PC-9 (cell line): ENCODE measurements at regions of chr16 and their contacts with region 1.

Region 1: DNA sequence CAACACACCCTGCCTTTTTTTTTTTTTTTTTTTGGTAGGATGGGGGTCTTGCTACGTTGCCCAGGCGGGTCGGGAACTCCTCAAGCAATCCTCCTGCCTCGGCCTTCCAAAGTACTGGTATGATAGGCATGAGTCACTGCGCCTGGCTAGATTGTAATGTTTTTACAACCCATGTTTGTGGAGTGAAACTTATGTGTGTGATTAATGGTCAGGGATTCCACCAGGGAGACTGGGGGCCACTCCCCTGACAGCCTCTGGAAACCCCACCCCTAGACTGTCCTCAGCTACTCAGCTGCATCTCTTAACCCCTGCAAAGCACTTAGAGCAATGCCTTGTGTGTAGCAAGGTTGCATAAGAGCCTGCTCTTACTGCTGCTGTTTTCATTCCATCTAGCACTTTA is 220.5 kb downstream of the PARN start:
- DNase-seq: peak; percentile 63 to 79
- H3K4me3 ChIP-seq: no peak overlapping the region
- H3K27ac ChIP-seq: no peak overlapping the region; the same call in 1 of the 2 replicates
- H3K4me1 ChIP-seq: no peaks in the 10 kb centered on the region
- H3K27me3 ChIP-seq: no peaks in the 10 kb centered on the region
- CTCF ChIP-seq: no peak

Region 2: GRCh38 chr16:14263011-14263410 is 146.6 kb before region 1 on chr16:
- CTCF ChIA-PET with region 1: no interaction called
- POLR2A ChIA-PET with region 1: no interaction called
- intact Hi-C with region 1: no loop called
- DNase-seq: no peak
- H3K4me3 ChIP-seq: no peak overlapping the region
- H3K27ac ChIP-seq: no peak overlapping the region
- H3K4me1 ChIP-seq: no peaks in the 10 kb centered on the region
- H3K27me3 ChIP-seq: no peaks in the 10 kb centered on the region
- CTCF ChIP-seq: no peak

Region 3: GRCh38 chr16:14446796-14447195 is 37.2 kb after region 1 on chr16:
- CTCF ChIA-PET with region 1: no interaction called
- POLR2A ChIA-PET with region 1: interaction called, 20 read pairs
- intact Hi-C with region 1: no loop called
- DNase-seq: no peak
- H3K4me3 ChIP-seq: no peak overlapping the region
- H3K27ac ChIP-seq: no peak overlapping the region
- H3K4me1 ChIP-seq: no peaks in the 10 kb centered on the region
- H3K27me3 ChIP-seq: no peaks in the 10 kb centered on the region
- CTCF ChIP-seq: no peak